CD8-positive, alpha-beta T cell (primary cell): ENCODE measurements at regions of chr3 and their contacts with region 1.

Region 1: DNA sequence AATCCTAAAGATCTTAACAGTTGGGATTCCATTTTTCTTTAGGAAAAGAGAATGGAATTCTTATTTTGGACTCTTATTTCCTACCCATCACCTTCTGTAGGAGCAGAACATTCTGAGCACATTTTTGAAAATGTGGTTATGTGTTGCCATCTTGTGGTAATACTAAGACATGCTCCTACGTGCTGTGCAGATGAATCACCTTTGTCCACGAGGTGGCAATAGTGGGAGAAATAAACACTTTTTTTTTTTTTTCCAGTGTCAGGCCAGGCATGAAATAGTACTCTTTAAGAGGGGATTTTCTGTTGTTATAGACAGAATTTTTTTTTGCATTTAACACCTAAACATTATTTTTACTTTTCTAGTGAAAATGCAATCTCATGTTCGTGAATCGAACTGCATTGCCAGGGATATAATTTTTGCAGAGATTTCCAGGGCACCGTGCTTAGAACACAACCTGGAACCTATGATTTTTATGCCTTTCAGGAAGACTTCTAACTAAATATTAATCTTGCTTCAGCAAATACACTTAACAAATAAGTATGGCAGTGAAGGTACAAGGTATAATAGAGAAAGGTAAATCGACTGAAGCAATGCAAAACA is 196.6 kb downstream of the GAP43 start:
- DNase-seq: peak; percentile 26 to 88 (median 56)
- ATAC-seq: peak; percentile 91
- H3K4me3 ChIP-seq: no peak overlapping the region
- H3K4me3 Mint-ChIP-seq: no peak overlapping the region
- H3K27ac ChIP-seq: no peak overlapping the region
- H3K27ac Mint-ChIP-seq: no peak overlapping the region
- H3K4me1 ChIP-seq: no peaks in the 10 kb centered on the region
- H3K4me1 Mint-ChIP-seq: no peaks in the 10 kb centered on the region
- H3K27me3 ChIP-seq: peaks cover 0 to 3% of the 10 kb centered on the region in 2 experiments
- H3K27me3 Mint-ChIP-seq: no peaks in the 10 kb centered on the region
- CTCF ChIP-seq: peak; percentile 100

Region 2: GRCh38 chr3:113838631-113839209 is 1981.2 kb before region 1 on chr3 and contains the start of gene GRAMD1C:
- CTCF ChIA-PET with region 1: no interaction called
- POLR2A ChIA-PET with region 1: no interaction called
- intact Hi-C with region 1: loop called in 1 of 2 experiments (anchors 10 kb)
- DNase-seq: peak; percentile 65 to 93 (median 85)
- ATAC-seq: peak; percentile 99
- H3K4me3 ChIP-seq: peak within 1 kb of the TSS; percentile 47 to 53
- H3K4me3 Mint-ChIP-seq: peak within 1 kb of the TSS; percentile 80
- H3K27ac ChIP-seq: no peak within 1 kb of the TSS
- H3K27ac Mint-ChIP-seq: no peak within 1 kb of the TSS
- H3K4me1 ChIP-seq: no peaks in the 10 kb centered on the region
- H3K4me1 Mint-ChIP-seq: peaks cover 9% of the 10 kb centered on the region
- H3K27me3 ChIP-seq: no peaks in the 10 kb centered on the region
- H3K27me3 Mint-ChIP-seq: no peaks in the 10 kb centered on the region
- CTCF ChIP-seq: peak; percentile 81
- total RNA-seq, gene GRAMD1C: 0.65 to 1.00 TPM

Region 3: GRCh38 chr3:114152519-114153151 is 1667.2 kb before region 1 on chr3:
- CTCF ChIA-PET with region 1: no interaction called
- POLR2A ChIA-PET with region 1: no interaction called
- intact Hi-C with region 1: loop called in 1 of 2 experiments (anchors 5 kb)
- DNase-seq: peak; percentile 76 to 91 (median 87)
- ATAC-seq: peak; percentile 100
- H3K4me3 ChIP-seq: peak overlapping the region; percentile 46 to 50
- H3K4me3 Mint-ChIP-seq: peak overlapping the region; percentile 73
- H3K27ac ChIP-seq: peak overlapping the region in 1 of 2 experiments; percentile 47
- H3K27ac Mint-ChIP-seq: no peak overlapping the region
- H3K4me1 ChIP-seq: peaks cover 8% of the 10 kb centered on the region
- H3K4me1 Mint-ChIP-seq: peaks cover 10% of the 10 kb centered on the region
- H3K27me3 ChIP-seq: no peaks in the 10 kb centered on the region
- H3K27me3 Mint-ChIP-seq: no peaks in the 10 kb centered on the region
- CTCF ChIP-seq: peak; percentile 99

Region 4: DNA sequence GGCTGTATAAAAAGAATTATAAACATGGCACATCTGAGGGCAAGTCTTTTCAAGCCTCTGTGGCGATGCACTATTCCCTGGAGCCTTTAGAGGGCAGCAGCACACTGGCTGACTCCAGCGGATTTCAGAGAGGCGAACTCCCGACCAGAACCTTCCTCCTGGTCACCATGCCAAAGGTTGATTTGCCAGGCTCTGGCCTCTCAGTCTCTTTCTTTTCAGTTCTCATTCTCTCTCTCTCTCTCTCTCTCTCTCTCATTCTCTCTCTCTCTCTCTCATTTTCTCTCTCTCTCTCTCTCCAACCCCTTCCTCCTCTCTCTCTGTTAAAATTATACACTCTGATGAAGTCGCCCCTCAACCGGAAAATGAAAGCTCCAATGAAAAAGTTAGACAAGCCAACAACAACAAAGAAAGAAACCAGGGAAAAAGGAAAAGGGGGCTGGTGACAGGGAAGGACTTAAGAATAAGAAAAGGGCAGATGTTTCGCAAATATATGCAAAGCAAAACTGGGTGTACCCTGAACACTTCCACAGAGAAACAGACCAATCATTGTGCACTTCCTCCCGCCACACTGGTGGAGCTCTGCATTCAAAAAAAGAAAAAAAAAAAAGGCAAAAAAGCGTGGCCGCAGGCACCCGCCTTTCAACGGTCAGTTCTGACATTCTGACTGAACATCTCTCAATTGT is 1435.9 kb before region 1 on chr3:
- CTCF ChIA-PET with region 1: no interaction called
- POLR2A ChIA-PET with region 1: no interaction called
- intact Hi-C with region 1: loop called (anchors 2 to 10 kb)
- DNase-seq: peak; percentile 34 to 78 (median 65)
- ATAC-seq: peak; percentile 97
- H3K4me3 ChIP-seq: peak overlapping the region; percentile 30 to 44
- H3K4me3 Mint-ChIP-seq: peak overlapping the region; percentile 82
- H3K27ac ChIP-seq: peak overlapping the region in 1 of 2 experiments; percentile 43
- H3K27ac Mint-ChIP-seq: peak overlapping the region; percentile 82
- H3K4me1 ChIP-seq: peaks cover 6% of the 10 kb centered on the region
- H3K4me1 Mint-ChIP-seq: peaks cover 18% of the 10 kb centered on the region
- H3K27me3 ChIP-seq: no peaks in the 10 kb centered on the region
- H3K27me3 Mint-ChIP-seq: no peaks in the 10 kb centered on the region
- CTCF ChIP-seq: peak; percentile 91

Region 5: GRCh38 chr3:114827495-114827894 is 992.4 kb before region 1 on chr3:
- CTCF ChIA-PET with region 1: no interaction called
- POLR2A ChIA-PET with region 1: no interaction called
- intact Hi-C with region 1: loop called in 1 of 2 experiments (anchors 5 kb)
- DNase-seq: peak in 2 of 9 experiments; percentile 43 to 54
- ATAC-seq: no peak
- H3K4me3 ChIP-seq: no peak overlapping the region
- H3K4me3 Mint-ChIP-seq: no peak overlapping the region
- H3K27ac ChIP-seq: no peak overlapping the region
- H3K27ac Mint-ChIP-seq: no peak overlapping the region
- H3K4me1 ChIP-seq: no peaks in the 10 kb centered on the region
- H3K4me1 Mint-ChIP-seq: peaks cover 10% of the 10 kb centered on the region
- H3K27me3 ChIP-seq: no peaks in the 10 kb centered on the region
- H3K27me3 Mint-ChIP-seq: no peaks in the 10 kb centered on the region
- CTCF ChIP-seq: peak; percentile 22

Region 6: GRCh38 chr3:115836944-115837343 is 17.1 kb after region 1 on chr3:
- CTCF ChIA-PET with region 1: interaction called, 28 read pairs
- POLR2A ChIA-PET with region 1: no interaction called
- intact Hi-C with region 1: no loop called
- DNase-seq: peak in 2 of 9 experiments; percentile 10 to 11
- ATAC-seq: no peak
- H3K4me3 ChIP-seq: no peak overlapping the region
- H3K4me3 Mint-ChIP-seq: no peak overlapping the region
- H3K27ac ChIP-seq: no peak overlapping the region
- H3K27ac Mint-ChIP-seq: no peak overlapping the region
- H3K4me1 ChIP-seq: no peaks in the 10 kb centered on the region
- H3K4me1 Mint-ChIP-seq: no peaks in the 10 kb centered on the region
- H3K27me3 ChIP-seq: no peaks in the 10 kb centered on the region
- H3K27me3 Mint-ChIP-seq: peaks cover 3% of the 10 kb centered on the region
- CTCF ChIP-seq: peak; percentile 67